ENCODE measurements at regions of chr17 and their contacts with region 1.

Region 1: GRCh38 chr17:39199820-39200069 is 338 bp upstream of the RPL19 start:
- DNase-seq: peak; percentile 93
- ATAC-seq: peak; percentile 51
- H3K4me3 ChIP-seq: peak overlapping the region; percentile 66 to 82
- H3K27ac ChIP-seq: peak overlapping the region; percentile 93
- H3K4me1 ChIP-seq: peaks cover 24 to 54% of the 10 kb centered on the region in 2 experiments
- H3K27me3 ChIP-seq: no peaks in the 10 kb centered on the region
- CTCF ChIP-seq: no peak
- POLR2A ChIP-seq: peak; percentile 70
- RAD21 ChIP-seq: no peak

Region 2: DNA sequence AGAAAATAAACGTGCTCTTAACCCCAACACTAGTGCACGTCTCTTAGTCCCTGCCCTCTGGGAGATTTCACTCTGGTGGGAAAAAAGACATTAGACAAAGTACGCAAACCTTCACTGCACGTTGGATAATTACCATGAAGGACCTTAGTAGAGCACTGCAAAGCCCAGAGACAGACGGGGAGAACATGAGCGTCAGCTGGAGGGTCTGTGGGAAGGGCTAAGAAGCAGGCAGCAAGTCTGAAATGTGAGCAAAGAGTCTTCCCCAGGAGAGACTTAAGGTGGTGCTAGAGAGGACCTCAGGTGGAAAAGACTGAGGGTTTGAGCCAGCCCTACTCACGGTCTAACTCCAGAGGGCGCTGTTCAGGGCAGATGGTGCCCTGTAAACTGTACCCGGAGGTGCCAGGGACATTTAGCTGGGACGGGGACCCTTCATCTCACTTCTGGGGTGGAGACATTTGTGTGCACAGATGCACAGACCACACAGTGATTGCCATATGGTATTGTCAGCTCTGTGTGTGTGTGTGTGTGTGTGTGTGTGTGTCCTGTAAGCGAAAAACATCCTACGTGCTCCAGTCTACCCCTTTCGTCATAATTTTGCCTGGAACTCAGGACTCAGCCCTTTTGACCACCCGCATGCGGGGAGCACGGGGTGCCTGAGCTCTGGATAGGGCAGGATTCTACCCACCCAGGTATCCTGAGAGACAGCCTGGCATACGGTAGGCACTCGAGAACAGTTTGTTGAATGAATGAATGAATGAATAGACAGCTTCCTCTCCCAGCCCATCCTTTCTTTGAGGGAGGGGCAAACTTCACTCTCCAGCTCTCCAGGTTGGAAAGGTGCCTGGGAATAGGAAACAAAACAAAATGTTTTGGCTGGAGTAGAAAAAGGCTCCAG is 36.1 kb after region 1 on chr17:
- CTCF ChIA-PET with region 1: interaction called, 40 read pairs
- POLR2A ChIA-PET with region 1: interaction called, 16 read pairs
- RAD21 ChIA-PET with region 1: interaction called in 1 of 2 experiments, 5 read pairs
- intact Hi-C with region 1: no loop called
- DNase-seq: peak; percentile 87
- ATAC-seq: peak; percentile 83
- H3K4me3 ChIP-seq: no peak overlapping the region; a peak in 1 of 4 replicates
- H3K27ac ChIP-seq: no peak overlapping the region
- H3K4me1 ChIP-seq: peaks cover 18 to 52% of the 10 kb centered on the region in 2 experiments
- H3K27me3 ChIP-seq: no peaks in the 10 kb centered on the region
- CTCF ChIP-seq: peak; percentile 98 to 99 (median 99)
- POLR2A ChIP-seq: no peak
- RAD21 ChIP-seq: peak; percentile 41; the same call in 1 of the 2 replicates

Region 3: GRCh38 chr17:39306509-39307212 is 106.9 kb after region 1 on chr17:
- CTCF ChIA-PET with region 1: no interaction called
- POLR2A ChIA-PET with region 1: no interaction called
- RAD21 ChIA-PET with region 1: no interaction called
- intact Hi-C with region 1: no loop called
- DNase-seq: no peak
- ATAC-seq: no peak
- H3K4me3 ChIP-seq: no peak overlapping the region
- H3K27ac ChIP-seq: no peak overlapping the region
- H3K4me1 ChIP-seq: no peaks in the 10 kb centered on the region
- H3K27me3 ChIP-seq: no peaks in the 10 kb centered on the region
- CTCF ChIP-seq: no peak
- POLR2A ChIP-seq: no peak
- RAD21 ChIP-seq: no peak

Region 4: GRCh38 chr17:39527220-39527813 is 327.6 kb after region 1 on chr17:
- CTCF ChIA-PET with region 1: no interaction called
- POLR2A ChIA-PET with region 1: no interaction called
- RAD21 ChIA-PET with region 1: no interaction called
- intact Hi-C with region 1: loop called (anchors 10 kb)
- DNase-seq: peak; percentile 12
- ATAC-seq: peak; percentile 72
- H3K4me3 ChIP-seq: no peak overlapping the region
- H3K27ac ChIP-seq: no peak overlapping the region
- H3K4me1 ChIP-seq: no peaks in the 10 kb centered on the region
- H3K27me3 ChIP-seq: no peaks in the 10 kb centered on the region
- CTCF ChIP-seq: peak; percentile 32 to 62 (median 58); a peak in 5 of 6 replicates
- POLR2A ChIP-seq: no peak
- RAD21 ChIP-seq: peak; percentile 27; the same call in 1 of the 2 replicates